ENCODE measurements at regions of chr15 and their contacts with region 1.

Region 1: GRCh38 chr15:40098489-40099261 is 10.0 kb downstream of the BMF start:
- DNase-seq: peak; percentile 87
- H3K4me3 Mint-ChIP-seq: peak overlapping the region; percentile 54
- H3K27ac Mint-ChIP-seq: peak overlapping the region; percentile 96
- H3K4me1 Mint-ChIP-seq: peaks cover 70% of the 10 kb centered on the region
- H3K27me3 Mint-ChIP-seq: no peaks in the 10 kb centered on the region

Region 2: DNA sequence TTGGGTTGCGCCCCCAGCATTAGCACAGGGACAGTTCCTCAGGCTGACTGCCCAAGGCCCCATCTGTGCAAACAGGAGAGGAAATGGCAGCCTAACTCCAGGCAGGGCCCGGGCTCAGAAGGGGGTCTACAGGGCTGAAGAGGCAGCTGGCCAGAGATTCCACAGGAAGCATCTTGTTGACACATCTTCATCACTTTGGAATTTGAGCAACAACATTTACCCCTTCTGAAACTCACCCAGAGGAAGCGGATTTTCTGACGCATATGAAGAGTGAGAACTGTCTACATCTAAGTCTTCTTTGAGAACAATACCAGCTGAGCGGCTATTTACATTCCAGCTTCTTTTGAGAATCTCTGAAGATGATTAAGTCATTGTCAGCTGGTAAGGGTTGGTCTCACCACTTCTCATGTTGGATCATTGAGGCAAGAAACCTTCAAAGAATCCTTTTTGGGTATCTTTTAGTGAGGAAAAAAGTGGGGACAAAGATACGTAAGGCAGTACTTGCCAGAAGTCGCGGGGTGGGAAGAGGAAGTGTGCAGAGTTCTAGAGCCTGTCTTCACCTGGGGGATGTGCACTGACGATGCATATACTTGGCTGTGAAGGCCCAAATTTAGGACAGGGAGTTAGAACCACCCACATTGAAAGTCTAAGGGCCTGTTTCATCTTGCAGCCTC is 34.3 kb before region 1 on chr15:
- CTCF ChIA-PET with region 1: interaction called, 4 read pairs
- intact Hi-C with region 1: loop called (anchors 1 kb)
- DNase-seq: peak; percentile 58
- H3K4me3 Mint-ChIP-seq: no peak overlapping the region
- H3K27ac Mint-ChIP-seq: peak overlapping the region; percentile 64
- H3K4me1 Mint-ChIP-seq: peaks cover 17% of the 10 kb centered on the region
- H3K27me3 Mint-ChIP-seq: no peaks in the 10 kb centered on the region

Region 3: GRCh38 chr15:40081691-40082194 is 16.9 kb before region 1 on chr15:
- CTCF ChIA-PET with region 1: interaction called, 6 read pairs
- intact Hi-C with region 1: loop called (anchors 2 kb)
- DNase-seq: peak; percentile 40
- H3K4me3 Mint-ChIP-seq: peak overlapping the region; percentile 47
- H3K27ac Mint-ChIP-seq: no peak overlapping the region
- H3K4me1 Mint-ChIP-seq: peaks cover 29% of the 10 kb centered on the region
- H3K27me3 Mint-ChIP-seq: peaks cover 35% of the 10 kb centered on the region

Region 4: DNA sequence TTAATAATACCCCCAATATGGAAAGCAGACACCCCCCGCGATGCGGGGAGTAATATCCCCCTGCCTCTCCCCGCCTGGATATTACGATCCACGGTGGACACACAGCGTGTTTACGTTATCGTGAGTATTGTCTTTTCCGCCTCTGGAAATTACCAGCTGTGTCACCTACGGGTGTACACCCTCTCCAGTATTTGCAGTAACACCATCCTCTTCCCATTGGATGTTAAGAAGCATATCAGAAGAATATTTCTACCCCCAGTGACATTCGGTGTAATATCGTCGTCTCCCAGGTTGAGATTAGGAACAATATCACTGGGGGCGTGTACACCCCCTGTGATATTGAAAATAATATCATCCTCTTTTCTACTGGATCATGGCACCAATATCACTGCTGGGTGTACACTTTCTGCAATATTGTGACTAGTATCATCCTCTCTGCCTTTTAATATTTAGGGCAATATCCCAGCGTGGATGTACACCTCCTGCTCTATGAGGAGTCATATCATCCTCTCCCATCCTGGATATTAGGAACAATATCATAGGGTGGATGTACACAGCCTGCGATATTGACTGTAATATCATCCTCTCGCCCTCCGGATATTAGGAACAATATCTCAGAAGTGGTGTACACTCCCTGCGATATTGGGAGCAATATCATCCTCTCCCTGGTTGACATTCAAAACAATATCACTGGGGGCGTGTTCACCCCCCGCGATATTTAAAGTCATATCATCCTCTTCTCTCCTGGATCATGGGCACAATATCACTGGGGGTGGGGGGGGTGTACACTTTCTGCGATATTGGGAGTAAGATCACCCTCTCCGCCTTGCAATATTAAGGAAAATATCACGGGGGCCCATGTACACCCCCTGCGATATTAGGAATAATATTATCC is 30.3 kb after region 1 on chr15:
- CTCF ChIA-PET with region 1: interaction called, 3 read pairs
- intact Hi-C with region 1: loop called (anchors 2 kb)
- DNase-seq: peak; percentile 45
- H3K4me3 Mint-ChIP-seq: no peak overlapping the region
- H3K27ac Mint-ChIP-seq: no peak overlapping the region
- H3K4me1 Mint-ChIP-seq: no peaks in the 10 kb centered on the region
- H3K27me3 Mint-ChIP-seq: no peaks in the 10 kb centered on the region

Measured in activated naive CD4-positive, alpha-beta T cell treated with anti-CD3 and anti-CD28 coated beads for 36 hours (primary cell).